ENCODE measurements at regions of chr7 and their contacts with region 1.

Region 1: GRCh38 chr7:87173471-87173870 is 21.2 kb downstream of the DMTF1 start:
- DNase-seq: no peak
- H3K4me3 ChIP-seq: no peak overlapping the region
- H3K27ac ChIP-seq: no peak overlapping the region
- H3K4me1 ChIP-seq: no peaks in the 10 kb centered on the region
- H3K27me3 ChIP-seq: no peaks in the 10 kb centered on the region
- CTCF ChIP-seq: no peak
- EP300 ChIP-seq: no peak
- POLR2A ChIP-seq: no peak

Region 2: DNA sequence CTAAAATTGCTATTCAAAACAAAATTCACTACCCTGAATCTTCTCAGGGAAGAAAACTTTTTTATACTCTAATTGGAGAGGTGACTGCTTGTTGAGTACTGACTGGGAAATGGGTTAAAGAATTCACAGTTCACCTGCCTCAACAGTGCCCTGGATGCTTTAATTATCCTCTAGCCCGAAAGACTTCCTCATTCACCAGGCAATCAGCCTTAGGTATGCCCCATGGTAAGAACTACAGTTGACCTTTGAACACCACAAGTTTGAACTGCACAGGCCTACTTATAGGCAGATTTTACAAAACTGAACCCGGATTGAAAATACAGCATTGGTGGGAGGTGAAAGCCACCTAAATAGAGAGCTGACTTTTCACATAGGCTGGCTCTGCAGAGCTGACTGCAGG is 289.3 kb before region 1 on chr7:
- intact Hi-C with region 1: no loop called
- DNase-seq: no peak
- H3K4me3 ChIP-seq: no peak overlapping the region
- H3K27ac ChIP-seq: no peak overlapping the region
- H3K4me1 ChIP-seq: no peaks in the 10 kb centered on the region
- H3K27me3 ChIP-seq: no peaks in the 10 kb centered on the region
- CTCF ChIP-seq: no peak
- EP300 ChIP-seq: no peak
- POLR2A ChIP-seq: no peak

Region 3: DNA sequence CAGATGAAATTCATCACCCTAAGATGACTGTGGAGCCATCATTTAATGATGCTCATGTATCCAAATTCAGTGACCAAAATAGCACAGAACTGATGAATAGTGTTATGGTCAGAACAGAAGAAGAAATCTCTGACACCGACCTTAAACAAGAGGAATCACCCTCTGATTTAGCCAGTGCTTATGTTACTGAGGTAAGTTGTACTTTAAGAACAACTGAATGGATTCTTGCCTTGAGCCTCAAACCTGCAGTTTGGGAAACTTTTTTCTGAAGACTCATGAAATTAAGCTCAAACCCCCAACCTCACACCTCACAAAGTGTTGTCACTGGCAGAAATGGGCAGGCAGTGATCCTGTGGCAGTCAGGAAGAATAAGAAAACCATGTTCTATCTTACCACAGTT is 20.4 kb after region 1 on chr7:
- intact Hi-C with region 1: loop called (anchors 2 kb)
- DNase-seq: no peak
- H3K4me3 ChIP-seq: no peak overlapping the region
- H3K27ac ChIP-seq: no peak overlapping the region
- H3K4me1 ChIP-seq: no peaks in the 10 kb centered on the region
- H3K27me3 ChIP-seq: no peaks in the 10 kb centered on the region
- CTCF ChIP-seq: no peak
- EP300 ChIP-seq: no peak
- POLR2A ChIP-seq: no peak

Region 4: DNA sequence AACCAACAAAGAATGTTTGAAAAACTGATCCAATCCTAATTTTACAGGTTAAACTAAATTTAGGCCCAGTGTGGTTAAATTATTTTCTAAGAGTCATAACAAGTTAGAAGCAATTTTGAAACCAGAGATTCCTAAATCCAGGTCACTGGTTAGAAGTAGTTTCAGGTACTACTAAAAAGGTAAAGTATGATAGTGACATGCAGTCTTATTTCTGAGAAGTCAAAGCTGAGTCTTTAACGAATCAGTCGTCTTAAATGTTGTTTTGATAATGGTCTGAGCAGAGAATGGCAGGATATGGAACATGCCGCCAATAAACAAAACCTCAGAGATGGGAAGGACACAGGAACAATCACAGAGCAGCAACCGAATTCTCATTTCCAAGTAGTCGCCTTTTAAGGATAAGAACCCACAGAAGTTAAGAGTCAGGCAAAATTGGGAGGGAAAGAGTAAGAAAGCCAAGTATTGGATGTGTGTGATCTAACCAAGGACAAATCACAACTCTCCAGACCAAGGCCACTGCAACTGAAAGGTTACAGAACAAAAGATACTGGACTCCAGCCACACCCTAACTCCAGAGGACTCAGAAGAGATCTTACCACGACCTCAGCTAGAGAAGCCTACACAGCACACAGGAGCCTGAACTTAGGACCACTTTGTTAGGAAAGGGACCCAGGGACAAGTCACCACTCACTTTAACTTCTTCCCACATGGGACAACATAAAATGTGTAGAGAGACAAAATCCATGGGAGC is 26.4 kb after region 1 on chr7:
- intact Hi-C with region 1: loop called (anchors 2 kb)
- DNase-seq: no peak
- H3K4me3 ChIP-seq: no peak overlapping the region
- H3K27ac ChIP-seq: peak overlapping the region in 1 of 4 donors; percentile 3
- H3K4me1 ChIP-seq: peaks cover 0 to 13% (median 6%) of the 10 kb centered on the region in 4 donors
- H3K27me3 ChIP-seq: no peaks in the 10 kb centered on the region
- CTCF ChIP-seq: no peak
- EP300 ChIP-seq: no peak
- POLR2A ChIP-seq: no peak

Measured in esophagus muscularis mucosa (tissue), 4 donors.